GM12878 (cell line): ENCODE measurements at regions of chr3 and their contacts with region 1.

Region 1: GRCh38 chr3:170128977-170129431 is 52.5 kb downstream of the PHC3 start:
- DNase-seq: no peak
- ATAC-seq: peak; percentile 74
- H3K4me3 ChIP-seq: no peak overlapping the region
- H3K27ac ChIP-seq: peak overlapping the region; percentile 94
- H3K4me1 ChIP-seq: peaks cover 27% of the 10 kb centered on the region
- H3K27me3 ChIP-seq: no peaks in the 10 kb centered on the region
- CTCF ChIP-seq: no peak
- EP300 ChIP-seq: no peak
- POLR2A ChIP-seq: peak; percentile 53; the same call in 1 of the 2 replicates
- RAD21 ChIP-seq: no peak

Region 2: DNA sequence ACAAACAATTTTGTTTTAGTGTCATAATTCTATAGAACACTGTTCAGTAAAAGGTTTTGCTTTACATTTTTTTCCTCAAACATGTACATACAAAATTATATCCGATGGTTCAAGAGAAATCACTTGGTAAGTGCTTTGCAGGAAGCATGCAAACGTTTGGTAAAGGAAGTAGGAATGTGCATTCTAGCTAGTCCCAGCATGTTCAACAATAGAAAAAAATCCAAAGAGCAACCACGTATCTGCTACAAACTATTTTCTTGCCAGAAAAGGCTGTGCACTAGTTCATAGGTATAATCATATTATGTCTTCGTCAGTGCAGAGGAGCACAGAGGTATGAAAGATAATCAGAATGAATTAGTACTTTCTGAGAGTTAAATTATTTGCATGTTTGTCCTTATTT is 33.2 kb before region 1 on chr3:
- CTCF ChIA-PET with region 1: interaction called, 3 read pairs
- POLR2A ChIA-PET with region 1: interaction called, 3 read pairs
- RAD21 ChIA-PET with region 1: interaction called, 5 read pairs
- SMC1A ChIA-PET with region 1: interaction called, 10 read pairs
- in situ Hi-C with region 1: no loop called
- intact Hi-C with region 1: no loop called
- DNase-seq: no peak
- ATAC-seq: no peak
- H3K4me3 ChIP-seq: no peak overlapping the region
- H3K27ac ChIP-seq: no peak overlapping the region
- H3K4me1 ChIP-seq: peaks cover 13% of the 10 kb centered on the region
- H3K27me3 ChIP-seq: no peaks in the 10 kb centered on the region
- CTCF ChIP-seq: no peak
- EP300 ChIP-seq: no peak
- POLR2A ChIP-seq: no peak
- RAD21 ChIP-seq: no peak

Region 3: GRCh38 chr3:170144437-170144843 is 15.4 kb after region 1 on chr3:
- CTCF ChIA-PET with region 1: interaction called, 6 read pairs
- POLR2A ChIA-PET with region 1: interaction called, 5 read pairs
- RAD21 ChIA-PET with region 1: interaction called, 7 read pairs
- SMC1A ChIA-PET with region 1: interaction called, 10 read pairs
- in situ Hi-C with region 1: no loop called
- intact Hi-C with region 1: no loop called
- DNase-seq: peak; percentile 65
- ATAC-seq: peak; percentile 97
- H3K4me3 ChIP-seq: no peak overlapping the region
- H3K27ac ChIP-seq: peak overlapping the region; percentile 67
- H3K4me1 ChIP-seq: peaks cover 13% of the 10 kb centered on the region
- H3K27me3 ChIP-seq: no peaks in the 10 kb centered on the region
- CTCF ChIP-seq: no peak
- EP300 ChIP-seq: peak in 1 of 2 experiments; percentile 54; a peak in 1 of 4 replicates
- POLR2A ChIP-seq: no peak
- RAD21 ChIP-seq: no peak

Region 4: GRCh38 chr3:170171563-170171962 is 42.6 kb after region 1 on chr3:
- CTCF ChIA-PET with region 1: interaction called, 11 read pairs
- POLR2A ChIA-PET with region 1: interaction called, 9 read pairs
- RAD21 ChIA-PET with region 1: interaction called, 10 read pairs
- SMC1A ChIA-PET with region 1: interaction called, 14 read pairs
- in situ Hi-C with region 1: no loop called
- intact Hi-C with region 1: no loop called
- DNase-seq: no peak
- ATAC-seq: peak; percentile 77
- H3K4me3 ChIP-seq: peak overlapping the region; percentile 11; the same call in 1 of the 2 replicates
- H3K27ac ChIP-seq: peak overlapping the region; percentile 71
- H3K4me1 ChIP-seq: peaks cover 13% of the 10 kb centered on the region
- H3K27me3 ChIP-seq: no peaks in the 10 kb centered on the region
- CTCF ChIP-seq: no peak
- EP300 ChIP-seq: no peak
- POLR2A ChIP-seq: no peak
- RAD21 ChIP-seq: no peak

Region 5: DNA sequence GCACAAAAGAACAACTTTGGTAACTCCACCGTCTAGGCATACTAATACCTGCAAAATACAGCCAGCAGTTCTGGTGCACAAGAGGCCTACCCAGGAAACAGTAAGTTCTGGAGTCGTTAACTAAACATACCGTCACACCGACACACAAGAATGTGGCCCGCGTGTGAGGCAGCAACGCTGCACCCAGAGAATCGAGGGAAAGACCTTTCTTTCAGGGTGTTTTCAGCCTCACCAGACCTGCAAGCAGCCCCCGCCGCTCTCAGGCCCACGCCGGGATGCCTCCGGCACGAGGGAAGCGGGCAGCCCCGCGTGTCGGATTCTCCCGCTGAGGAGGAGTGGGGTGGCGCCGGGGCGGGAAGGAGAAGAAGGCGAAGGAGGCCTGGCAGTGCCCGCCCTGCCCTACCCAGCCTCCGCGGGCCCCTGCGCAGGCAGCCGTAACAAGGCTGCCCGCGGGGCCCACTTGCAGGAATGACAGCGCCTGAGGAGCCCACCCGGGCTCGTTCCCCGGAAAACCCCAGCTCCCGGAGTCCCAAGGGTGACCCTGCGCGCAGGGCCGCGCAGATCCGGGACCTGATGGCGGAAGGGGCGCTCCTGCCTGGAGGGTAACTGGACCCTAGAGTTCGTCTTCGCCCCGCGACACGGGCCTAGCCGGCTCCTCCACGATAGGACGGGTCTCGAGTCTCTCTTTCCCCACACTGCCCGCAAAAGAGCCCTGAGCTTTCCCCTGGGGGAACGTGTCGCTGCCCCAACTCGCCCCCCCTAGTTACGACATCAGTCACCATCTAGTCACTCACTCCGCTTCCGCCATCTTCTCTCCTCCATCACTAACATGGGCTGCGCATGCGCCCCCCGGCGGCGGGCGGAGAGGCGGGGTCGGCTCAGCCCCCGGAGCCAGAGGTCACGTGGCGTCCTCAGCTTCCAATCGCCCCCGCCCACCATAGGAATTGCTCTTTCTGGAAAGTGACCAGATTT is 52.2 kb after region 1 on chr3 and contains the start of gene PHC3:
- CTCF ChIA-PET with region 1: interaction called, 3 read pairs
- POLR2A ChIA-PET with region 1: no interaction called
- RAD21 ChIA-PET with region 1: interaction called, 7 read pairs
- SMC1A ChIA-PET with region 1: interaction called, 8 read pairs
- in situ Hi-C with region 1: no loop called
- intact Hi-C with region 1: loop called (anchors 5 kb)
- DNase-seq: peak; percentile 73
- ATAC-seq: peak; percentile 80
- H3K4me3 ChIP-seq: peak within 1 kb of the TSS; percentile 89
- H3K27ac ChIP-seq: peak within 1 kb of the TSS; percentile 98
- H3K4me1 ChIP-seq: peaks cover 3% of the 10 kb centered on the region
- H3K27me3 ChIP-seq: no peaks in the 10 kb centered on the region
- CTCF ChIP-seq: 0 out of 6 replicates have a peak, but pooled peaks of 1 of the 3 experiments have one; percentile 17
- EP300 ChIP-seq: no peak
- POLR2A ChIP-seq: peak; percentile 79
- RAD21 ChIP-seq: no peak
- polyA plus RNA-seq, gene PHC3: 3.3 to 5.8 TPM